Panc1 (cell line): ENCODE measurements at regions of chr19 and their contacts with region 1.

Region 1: DNA sequence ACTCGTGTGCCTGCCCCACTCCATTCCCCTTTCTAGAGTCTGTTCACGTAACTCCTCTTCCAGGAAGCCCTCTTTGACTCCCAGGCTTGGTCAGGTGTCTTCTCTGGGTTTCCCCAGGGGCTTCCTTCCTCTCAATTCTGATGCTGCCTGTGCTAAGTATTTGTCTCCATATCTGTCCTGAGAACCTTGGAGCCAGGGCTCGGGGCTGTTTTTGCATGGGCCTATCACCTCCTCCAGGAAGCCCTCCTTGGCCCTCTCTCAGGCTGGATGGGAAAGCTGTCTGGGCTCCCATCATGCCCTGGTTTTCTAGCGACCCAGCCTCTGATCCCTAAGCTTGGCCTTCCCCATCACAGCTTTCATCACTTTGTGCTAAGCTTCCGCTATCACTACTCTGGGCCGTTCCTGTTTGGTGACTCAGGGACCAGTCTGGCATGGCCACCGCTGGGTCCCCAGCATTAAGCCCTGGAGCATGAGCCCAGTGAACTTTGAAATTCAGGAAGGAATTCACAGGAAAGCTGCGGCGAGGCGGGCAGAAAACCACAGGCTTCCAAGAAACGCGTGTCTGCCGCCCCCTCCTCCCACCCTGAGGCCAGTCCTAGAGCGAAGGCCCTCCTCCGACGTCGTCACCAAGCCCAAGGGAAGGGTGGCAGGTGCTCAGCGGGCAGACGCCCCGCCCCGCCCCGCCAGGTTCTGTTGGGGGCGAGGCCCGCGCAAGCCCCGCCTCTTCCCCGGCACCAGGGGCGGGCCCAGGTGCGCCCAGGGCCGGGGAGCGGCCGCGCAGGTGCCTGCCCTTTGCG is 486 bp upstream of the SPINT2 start:
- DNase-seq: no peak
- ATAC-seq: peak; percentile 74
- H3K4me3 ChIP-seq: peak overlapping the region; percentile 65 to 97
- H3K27ac ChIP-seq: peak overlapping the region; percentile 81
- H3K4me1 ChIP-seq: peaks cover 32% of the 10 kb centered on the region
- H3K27me3 ChIP-seq: no peaks in the 10 kb centered on the region
- CTCF ChIP-seq: no peak

Region 2: GRCh38 chr19:38061294-38061693 is 202.6 kb before region 1 on chr19:
- CTCF ChIA-PET with region 1: no interaction called
- POLR2A ChIA-PET with region 1: no interaction called
- in situ Hi-C with region 1: no loop called
- intact Hi-C with region 1: no loop called
- DNase-seq: no peak
- ATAC-seq: no peak
- H3K4me3 ChIP-seq: no peak overlapping the region
- H3K27ac ChIP-seq: peak overlapping the region; percentile 62; the same call in 1 of the 2 replicates
- H3K4me1 ChIP-seq: peaks cover 18% of the 10 kb centered on the region
- H3K27me3 ChIP-seq: no peaks in the 10 kb centered on the region
- CTCF ChIP-seq: no peak

Region 3: DNA sequence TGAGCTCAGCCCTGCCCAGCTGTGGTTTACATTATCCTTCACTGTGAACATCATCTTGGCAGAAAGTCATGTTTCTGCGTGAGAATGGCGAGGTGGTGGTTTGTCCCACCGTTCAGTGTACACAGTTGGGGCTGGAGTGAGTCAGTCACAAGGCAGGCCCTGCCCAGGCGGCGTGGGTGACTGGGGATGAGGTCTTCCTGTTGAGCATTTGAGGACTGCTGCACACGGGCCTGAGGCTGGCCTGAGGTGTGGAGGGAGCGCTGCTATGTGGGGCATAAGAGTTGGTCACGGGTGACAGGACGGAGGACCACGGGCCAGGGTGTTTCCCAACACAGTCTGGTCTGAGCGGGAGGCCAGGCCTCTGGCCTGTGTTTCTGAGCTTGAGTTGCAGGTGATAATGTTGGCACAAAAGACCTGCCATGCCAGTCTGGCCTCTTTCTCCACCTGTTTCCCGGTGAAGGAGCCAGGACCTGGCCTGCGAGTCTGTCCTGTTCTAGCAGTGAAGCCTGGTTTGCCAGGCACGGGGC is 26.8 kb after region 1 on chr19:
- CTCF ChIA-PET with region 1: no interaction called
- POLR2A ChIA-PET with region 1: no interaction called
- in situ Hi-C with region 1: no loop called
- intact Hi-C with region 1: no loop called
- DNase-seq: no peak
- ATAC-seq: peak; percentile 42
- H3K4me3 ChIP-seq: no peak overlapping the region
- H3K27ac ChIP-seq: peak overlapping the region; percentile 32
- H3K4me1 ChIP-seq: peaks cover 33% of the 10 kb centered on the region
- H3K27me3 ChIP-seq: no peaks in the 10 kb centered on the region
- CTCF ChIP-seq: no peak

Region 4: GRCh38 chr19:38303517-38304349 is 39.8 kb after region 1 on chr19 and contains the start of gene C19orf33:
- CTCF ChIA-PET with region 1: interaction called, 3 read pairs
- POLR2A ChIA-PET with region 1: interaction called, 13 read pairs
- in situ Hi-C with region 1: no loop called
- intact Hi-C with region 1: no loop called
- DNase-seq: peak; percentile 86
- ATAC-seq: peak; percentile 57
- H3K4me3 ChIP-seq: peak within 1 kb of the TSS; percentile 71 to 88
- H3K27ac ChIP-seq: peak within 1 kb of the TSS; percentile 90
- H3K4me1 ChIP-seq: peaks cover 61% of the 10 kb centered on the region
- H3K27me3 ChIP-seq: no peaks in the 10 kb centered on the region
- CTCF ChIP-seq: no peak
- total RNA-seq, gene C19orf33: 201 TPM

Region 5: GRCh38 chr19:38653028-38653571 is 389.2 kb after region 1 on chr19:
- CTCF ChIA-PET with region 1: no interaction called
- POLR2A ChIA-PET with region 1: interaction called, 12 read pairs
- in situ Hi-C with region 1: no loop called
- intact Hi-C with region 1: no loop called
- DNase-seq: no peak
- ATAC-seq: no peak
- H3K4me3 ChIP-seq: peak overlapping the region; percentile 50 to 68
- H3K27ac ChIP-seq: peak overlapping the region; percentile 96
- H3K4me1 ChIP-seq: peaks cover 73% of the 10 kb centered on the region
- H3K27me3 ChIP-seq: no peaks in the 10 kb centered on the region
- CTCF ChIP-seq: no peak